ENCODE measurements at regions of chr11 and their contacts with region 1.

Region 1: DNA sequence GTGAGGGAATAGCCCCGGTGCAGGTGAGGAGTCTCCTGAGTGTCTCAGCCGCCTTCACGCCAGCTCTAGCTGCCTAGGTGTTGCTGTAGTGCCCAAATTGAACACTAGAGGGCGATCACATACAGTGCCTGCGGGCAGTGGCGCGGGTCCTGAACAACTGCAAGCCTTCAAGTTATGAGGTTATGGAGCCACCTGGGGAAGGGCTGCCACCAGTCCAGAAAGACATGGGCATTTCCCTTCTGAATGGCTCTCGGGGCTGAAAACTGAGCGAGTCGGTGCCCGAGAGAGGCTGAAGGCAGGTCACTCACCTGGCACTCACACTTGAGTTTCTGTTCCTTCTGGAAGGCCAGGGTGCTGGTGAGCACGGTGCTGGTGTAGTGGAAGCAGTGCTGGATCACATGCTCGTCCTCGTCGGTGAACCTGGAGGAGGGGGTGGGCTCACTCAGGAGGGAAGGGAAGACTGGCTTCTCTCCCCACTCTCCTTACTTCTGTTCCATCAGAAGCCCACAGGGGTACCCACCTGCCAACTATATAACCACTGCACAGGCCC is 88.4 kb downstream of the PDE2A start:
- DNase-seq: peak; percentile 72
- H3K4me3 ChIP-seq: no peak overlapping the region
- H3K27ac ChIP-seq: no peak overlapping the region
- H3K4me1 ChIP-seq: peaks cover 0 to 22% (median 13%) of the 10 kb centered on the region in 4 donors
- H3K27me3 ChIP-seq: peaks cover 53% of the 10 kb centered on the region
- CTCF ChIP-seq: peak; percentile 89 to 98 (median 95)
- EP300 ChIP-seq: no peak
- POLR2A ChIP-seq: no peak

Region 2: GRCh38 chr11:72642884-72643511 is 57.2 kb after region 1 on chr11:
- in situ Hi-C with region 1: loop called (anchors 5 to 10 kb)
- intact Hi-C with region 1: loop called (anchors 2 kb)
- DNase-seq: peak; percentile 63
- H3K4me3 ChIP-seq: peak overlapping the region; percentile 38 to 65 (median 56)
- H3K27ac ChIP-seq: peak overlapping the region; percentile 8 to 80 (median 52)
- H3K4me1 ChIP-seq: peaks cover 3 to 22% (median 15%) of the 10 kb centered on the region in 4 donors
- H3K27me3 ChIP-seq: peaks cover 18% of the 10 kb centered on the region
- CTCF ChIP-seq: peak; percentile 95 to 99 (median 98)
- EP300 ChIP-seq: no peak
- POLR2A ChIP-seq: no peak

Region 3: DNA sequence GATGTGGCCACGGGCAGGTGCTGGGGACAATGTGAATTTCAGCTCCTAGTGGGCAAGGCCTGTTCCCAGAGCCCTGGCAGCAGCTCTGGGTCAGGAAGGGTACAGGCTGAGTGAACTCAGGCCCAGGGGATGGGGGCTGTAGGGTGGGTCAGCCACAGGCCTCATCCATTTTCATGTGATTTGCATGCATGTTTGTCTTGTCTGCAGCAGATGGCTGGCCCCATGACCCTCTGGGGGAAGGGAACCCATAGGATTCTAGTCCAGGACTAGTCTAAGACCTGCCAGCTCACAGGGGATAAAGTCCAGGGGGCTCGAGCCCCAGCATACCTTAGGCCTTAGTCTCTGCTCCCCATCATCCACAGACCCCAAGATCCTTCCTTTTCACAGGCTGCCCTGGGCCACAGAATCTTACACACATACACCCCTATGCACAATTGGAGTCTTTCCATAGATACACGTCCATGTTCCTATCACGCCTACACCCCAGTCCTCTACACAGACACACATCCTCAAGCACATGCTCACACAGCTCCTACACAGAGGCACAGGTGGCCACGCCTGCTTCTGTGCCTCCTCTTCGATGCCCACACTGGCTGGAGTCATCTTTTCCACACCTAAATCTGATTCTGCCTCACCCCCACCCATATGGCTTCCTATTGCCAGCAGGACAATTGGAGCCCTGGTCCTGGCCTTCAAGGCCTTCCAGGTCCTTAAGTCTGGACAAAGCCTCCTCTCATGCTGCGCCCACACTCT is 62.7 kb after region 1 on chr11:
- in situ Hi-C with region 1: loop called (anchors 5 to 10 kb)
- intact Hi-C with region 1: loop called (anchors 2 kb)
- DNase-seq: no peak
- H3K4me3 ChIP-seq: no peak overlapping the region
- H3K27ac ChIP-seq: no peak overlapping the region
- H3K4me1 ChIP-seq: no peaks in the 10 kb centered on the region
- H3K27me3 ChIP-seq: peaks cover 6% of the 10 kb centered on the region
- CTCF ChIP-seq: no peak
- EP300 ChIP-seq: no peak
- POLR2A ChIP-seq: no peak

Region 4: DNA sequence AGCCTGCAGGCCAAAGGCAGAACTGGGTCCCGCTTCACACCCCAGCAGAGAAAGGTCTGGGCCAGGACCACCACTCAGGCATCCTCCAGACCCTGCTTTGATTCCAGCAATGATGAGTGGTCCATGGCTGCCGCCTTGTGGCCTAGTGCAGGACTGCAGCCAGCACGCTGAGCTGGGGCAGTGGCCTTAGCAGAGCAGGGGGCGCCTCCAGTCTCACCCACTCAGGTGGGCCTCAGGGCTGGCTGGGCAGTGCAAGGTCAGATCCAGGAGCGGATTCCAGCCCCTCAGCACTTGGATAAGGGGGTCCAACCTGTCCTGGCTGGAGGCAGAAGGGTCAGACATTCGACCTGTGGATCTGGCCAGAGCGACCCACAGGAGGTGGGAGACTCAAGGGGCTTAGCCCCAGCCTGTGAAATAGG is 98.0 kb after region 1 on chr11:
- in situ Hi-C with region 1: no loop called
- intact Hi-C with region 1: loop called (anchors 5 kb)
- DNase-seq: peak; percentile 60
- H3K4me3 ChIP-seq: no peak overlapping the region
- H3K27ac ChIP-seq: peak overlapping the region in 1 of 4 donors; percentile 8
- H3K4me1 ChIP-seq: peaks cover 0 to 5% (median 0%) of the 10 kb centered on the region in 4 donors
- H3K27me3 ChIP-seq: peaks cover 19% of the 10 kb centered on the region
- CTCF ChIP-seq: peak; percentile 90 to 96 (median 92)
- EP300 ChIP-seq: no peak
- POLR2A ChIP-seq: no peak